Activated naive CD4-positive, alpha-beta T cell treated with anti-CD3 and anti-CD28 coated beads for 36 hours (primary cell): ENCODE measurements at regions of chr1 and their contacts with region 1.

Region 1: DNA sequence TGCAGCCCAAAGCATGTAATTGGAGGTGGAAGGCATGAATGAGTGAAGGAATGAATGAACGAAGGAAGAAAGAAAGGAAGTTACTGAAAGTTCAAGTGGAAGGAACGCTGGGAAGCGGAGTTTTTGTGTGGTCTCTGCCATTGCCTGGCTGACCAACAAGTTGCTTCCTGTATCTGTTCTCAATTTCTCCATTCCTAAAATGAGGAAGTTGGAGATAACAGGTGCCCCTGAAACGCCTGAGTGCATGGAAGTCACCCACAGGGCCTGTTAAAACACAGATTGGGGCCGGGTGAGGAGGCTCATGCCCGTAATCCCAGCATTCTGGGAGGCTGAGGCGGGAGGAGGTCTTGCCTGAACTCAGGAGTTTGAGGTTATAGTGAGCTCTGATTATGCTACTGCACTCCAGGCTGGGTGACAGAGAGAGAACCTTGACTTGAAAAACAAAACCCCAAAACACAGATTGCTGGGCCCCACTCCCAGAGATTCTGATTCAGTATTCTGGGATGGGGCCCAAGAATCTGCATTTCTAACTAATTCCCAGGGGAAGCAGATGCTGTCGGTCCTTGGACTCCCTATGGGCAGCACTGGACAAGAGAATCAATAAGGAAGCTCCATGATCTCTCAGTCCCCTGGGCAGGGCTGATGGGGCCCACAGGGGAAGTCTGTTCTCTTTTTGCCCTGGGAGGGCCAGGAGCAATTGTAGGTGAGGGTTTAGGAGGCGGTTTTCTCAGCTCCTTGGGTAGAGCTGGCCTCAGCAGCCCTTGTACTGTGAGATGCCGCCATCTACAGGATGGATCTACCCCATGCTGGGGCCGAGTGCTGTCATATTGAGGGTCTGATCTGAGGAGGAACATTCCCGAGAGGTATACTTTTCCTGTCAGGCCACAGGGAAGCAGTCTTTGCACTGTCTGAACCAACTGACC is 3.3 kb upstream of the CNR2 start:
- DNase-seq: peak; percentile 76
- H3K4me3 Mint-ChIP-seq: no peak overlapping the region
- H3K27ac Mint-ChIP-seq: no peak overlapping the region
- H3K4me1 Mint-ChIP-seq: peaks cover 19% of the 10 kb centered on the region
- H3K27me3 Mint-ChIP-seq: no peaks in the 10 kb centered on the region

Region 2: GRCh38 chr1:23904748-23905357 is 11.6 kb before region 1 on chr1:
- CTCF ChIA-PET with region 1: interaction called, 10 read pairs
- intact Hi-C with region 1: no loop called
- DNase-seq: peak; percentile 74
- H3K4me3 Mint-ChIP-seq: no peak overlapping the region
- H3K27ac Mint-ChIP-seq: no peak overlapping the region
- H3K4me1 Mint-ChIP-seq: peaks cover 23% of the 10 kb centered on the region
- H3K27me3 Mint-ChIP-seq: peaks cover 4% of the 10 kb centered on the region

Region 3: GRCh38 chr1:24070821-24071393 is 154.4 kb after region 1 on chr1:
- CTCF ChIA-PET with region 1: no interaction called
- intact Hi-C with region 1: no loop called
- DNase-seq: peak; percentile 87
- H3K4me3 Mint-ChIP-seq: no peak overlapping the region
- H3K27ac Mint-ChIP-seq: no peak overlapping the region
- H3K4me1 Mint-ChIP-seq: no peaks in the 10 kb centered on the region
- H3K27me3 Mint-ChIP-seq: no peaks in the 10 kb centered on the region